MCF 10A (cell line): ENCODE measurements at regions of chr2 and their contacts with region 1.

Region 1: DNA sequence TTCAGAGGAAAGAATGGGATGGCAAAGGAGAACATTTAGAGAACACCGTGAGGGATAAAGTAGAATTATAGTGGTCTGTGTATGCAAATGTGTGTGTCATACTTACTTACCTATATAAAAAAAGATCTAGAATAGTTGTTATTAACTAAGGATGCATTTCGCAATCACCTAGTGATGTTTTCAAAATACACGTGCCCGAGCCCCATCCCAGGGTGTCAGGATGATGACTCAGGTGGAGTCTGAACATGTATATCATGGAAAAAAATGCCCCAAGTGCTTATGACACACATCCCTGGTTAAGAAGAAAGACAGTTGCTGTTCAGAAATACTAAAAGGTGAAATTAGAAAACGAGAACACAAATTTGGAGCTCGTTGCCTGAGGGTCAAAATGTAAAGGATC is 109.0 kb downstream of the CERS6 start:
- DNase-seq: peak; percentile 94
- H3K4me3 Mint-ChIP-seq: peak overlapping the region; percentile 28
- H3K27ac Mint-ChIP-seq: peak overlapping the region; percentile 87
- H3K4me1 Mint-ChIP-seq: peaks cover 32% of the 10 kb centered on the region
- H3K27me3 Mint-ChIP-seq: no peaks in the 10 kb centered on the region
- CTCF ChIP-seq: no peak

Region 2: DNA sequence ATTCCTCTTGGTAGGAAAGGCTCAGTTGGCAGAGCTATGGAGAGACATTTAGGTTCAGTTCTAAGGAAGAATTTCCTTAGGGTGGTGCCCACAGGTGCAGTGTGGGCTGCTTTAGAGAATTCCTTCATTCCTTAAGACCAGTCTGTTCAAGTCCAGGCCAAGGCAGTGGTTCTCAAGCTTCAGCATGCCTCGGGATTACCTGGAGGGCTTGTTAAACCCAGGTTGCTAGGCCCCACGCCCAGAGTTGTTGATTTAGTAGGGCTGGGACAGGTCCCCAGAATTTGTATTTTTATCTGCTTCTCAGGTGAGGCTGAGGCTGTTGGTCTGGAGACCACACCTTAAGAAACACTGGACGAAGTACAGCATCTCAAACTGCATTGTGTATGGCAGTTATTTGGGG is 40.1 kb before region 1 on chr2:
- CTCF ChIA-PET with region 1: interaction called, 3 read pairs
- POLR2A ChIA-PET with region 1: interaction called, 12 read pairs
- intact Hi-C with region 1: loop called (anchors 5 kb)
- DNase-seq: peak; percentile 47
- H3K4me3 Mint-ChIP-seq: no peak overlapping the region
- H3K27ac Mint-ChIP-seq: peak overlapping the region; percentile 51
- H3K4me1 Mint-ChIP-seq: peaks cover 61% of the 10 kb centered on the region
- H3K27me3 Mint-ChIP-seq: no peaks in the 10 kb centered on the region
- CTCF ChIP-seq: no peak

Region 3: GRCh38 chr2:168530982-168531622 is 34.0 kb before region 1 on chr2:
- CTCF ChIA-PET with region 1: no interaction called
- POLR2A ChIA-PET with region 1: interaction called, 8 read pairs
- intact Hi-C with region 1: loop called (anchors 5 kb)
- DNase-seq: no peak
- H3K4me3 Mint-ChIP-seq: no peak overlapping the region
- H3K27ac Mint-ChIP-seq: peak overlapping the region; percentile 29
- H3K4me1 Mint-ChIP-seq: peaks cover 56% of the 10 kb centered on the region
- H3K27me3 Mint-ChIP-seq: no peaks in the 10 kb centered on the region
- CTCF ChIP-seq: no peak

Region 4: DNA sequence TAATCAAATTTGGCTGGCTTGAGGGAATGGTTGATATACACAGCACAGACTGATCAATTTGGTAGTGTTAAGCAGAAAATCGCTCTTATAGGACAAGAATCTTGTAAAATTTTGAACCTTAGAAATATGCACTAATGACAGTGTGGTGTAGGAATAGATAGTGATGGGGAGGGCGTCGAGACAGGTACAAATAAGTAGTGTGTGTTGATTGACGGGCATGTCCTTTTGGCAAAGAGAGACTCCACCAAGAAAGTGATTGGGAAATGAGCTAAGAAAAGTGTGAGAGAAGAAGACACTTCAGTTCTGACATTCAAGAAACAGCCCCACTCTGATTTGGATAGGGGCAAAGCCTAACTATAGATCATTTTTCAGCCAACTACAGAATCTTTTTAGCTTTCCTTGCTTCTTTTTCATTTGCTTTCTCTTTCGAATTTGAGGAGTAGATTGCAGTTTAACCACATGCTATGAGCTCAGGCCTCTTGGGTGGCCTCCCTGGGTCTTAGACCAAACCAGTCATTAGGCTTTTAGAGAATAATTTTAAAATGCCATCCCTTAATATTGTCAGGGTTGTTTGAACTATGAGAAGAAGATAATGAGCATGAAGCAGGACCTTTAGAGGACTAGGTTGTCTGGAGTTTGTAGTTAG is 18.1 kb after region 1 on chr2:
- CTCF ChIA-PET with region 1: interaction called, 3 read pairs
- POLR2A ChIA-PET with region 1: interaction called, 54 read pairs
- intact Hi-C with region 1: loop called (anchors 1 kb)
- DNase-seq: peak; percentile 22
- H3K4me3 Mint-ChIP-seq: peak overlapping the region; percentile 17
- H3K27ac Mint-ChIP-seq: peak overlapping the region; percentile 92
- H3K4me1 Mint-ChIP-seq: peaks cover 38% of the 10 kb centered on the region
- H3K27me3 Mint-ChIP-seq: no peaks in the 10 kb centered on the region
- CTCF ChIP-seq: no peak